Prostate gland (tissue), 2 donors: ENCODE measurements at regions of chr1 and their contacts with region 1.

Region 1: DNA sequence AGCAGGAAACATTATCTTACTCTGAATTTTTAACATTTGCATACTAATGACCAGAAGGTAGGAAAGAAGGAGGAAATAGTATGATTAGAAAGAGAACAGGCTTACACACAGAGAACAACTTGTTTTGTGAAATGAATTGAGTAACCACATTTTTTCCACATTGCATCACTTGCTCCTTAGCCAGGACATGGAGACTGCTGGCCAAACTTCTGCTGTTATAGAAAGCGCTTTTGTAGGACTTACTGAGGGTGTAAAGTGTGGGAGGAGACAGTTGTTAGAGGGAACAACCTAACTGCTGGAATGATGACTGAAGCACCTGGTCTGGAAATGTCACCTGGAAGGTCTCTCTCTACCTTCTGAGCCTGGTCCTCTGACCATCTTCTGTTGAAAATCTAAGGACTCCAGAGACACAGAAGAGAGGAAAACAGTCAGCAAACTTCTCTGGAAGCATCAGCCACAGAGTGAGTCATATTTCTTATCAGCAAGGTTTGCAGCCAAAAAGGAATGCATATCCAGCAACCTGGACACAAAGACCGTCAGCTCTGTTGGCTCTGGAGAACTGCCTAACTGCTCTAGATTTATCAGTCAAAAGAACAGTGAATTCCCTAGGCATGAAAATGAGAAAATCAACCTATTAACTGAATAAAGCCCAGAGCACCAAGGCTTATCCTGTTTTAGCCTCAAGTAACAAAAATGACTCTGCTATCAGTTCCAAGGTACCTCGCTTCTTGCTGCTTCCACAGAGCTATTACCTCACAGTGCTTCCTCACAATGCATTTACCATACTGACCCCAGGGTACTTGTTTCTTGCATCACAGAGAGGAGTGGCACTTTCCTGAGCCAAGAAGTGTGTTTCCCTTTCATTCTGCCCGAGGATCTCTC is 88.0 kb upstream of the SLFNL1 start:
- DNase-seq: peak; percentile 72
- H3K4me3 ChIP-seq: no peak overlapping the region
- H3K27ac ChIP-seq: peak overlapping the region; percentile 65 to 74
- H3K4me1 ChIP-seq: peaks cover 6% of the 10 kb centered on the region
- H3K27me3 ChIP-seq: no peaks in the 10 kb centered on the region
- CTCF ChIP-seq: no peak
- POLR2A ChIP-seq: no peak

Region 2: GRCh38 chr1:41023279-41023990 is 86.1 kb before region 1 on chr1:
- intact Hi-C with region 1: loop called (anchors 10 kb)
- DNase-seq: no peak
- H3K4me3 ChIP-seq: no peak overlapping the region
- H3K27ac ChIP-seq: no peak overlapping the region
- H3K4me1 ChIP-seq: no peaks in the 10 kb centered on the region
- H3K27me3 ChIP-seq: no peaks in the 10 kb centered on the region
- CTCF ChIP-seq: peak in 1 of 4 experiments; percentile 26
- POLR2A ChIP-seq: no peak

Region 3: DNA sequence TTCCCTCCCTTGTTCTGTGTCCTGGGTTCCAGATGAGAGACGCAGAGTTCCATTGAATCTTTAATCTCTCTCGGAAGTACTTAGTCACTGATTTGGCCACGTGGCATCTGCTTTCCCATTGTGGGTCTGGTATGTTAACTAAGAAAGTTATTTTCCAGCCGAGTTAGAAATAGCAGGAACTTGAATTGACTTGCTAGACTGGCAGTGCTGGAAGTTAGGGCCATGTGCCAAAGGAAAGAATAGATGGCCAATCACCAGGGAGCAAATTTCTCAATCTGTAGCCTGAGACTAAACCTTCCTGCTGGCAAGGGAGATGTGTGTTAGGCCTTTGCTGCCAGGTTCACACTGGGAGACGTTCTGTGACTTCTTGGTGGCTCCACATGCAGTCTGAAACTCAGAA is 63.8 kb before region 1 on chr1:
- intact Hi-C with region 1: loop called (anchors 10 kb)
- DNase-seq: peak; percentile 93
- H3K4me3 ChIP-seq: peak overlapping the region; percentile 4 to 14
- H3K27ac ChIP-seq: peak overlapping the region; percentile 86 to 90
- H3K4me1 ChIP-seq: peaks cover 22% of the 10 kb centered on the region
- H3K27me3 ChIP-seq: no peaks in the 10 kb centered on the region
- CTCF ChIP-seq: no peak
- POLR2A ChIP-seq: no peak

Region 4: GRCh38 chr1:41294216-41294615 is 184.7 kb after region 1 on chr1:
- intact Hi-C with region 1: no loop called
- DNase-seq: peak; percentile 24
- H3K4me3 ChIP-seq: no peak overlapping the region
- H3K27ac ChIP-seq: no peak overlapping the region
- H3K4me1 ChIP-seq: no peaks in the 10 kb centered on the region
- H3K27me3 ChIP-seq: no peaks in the 10 kb centered on the region
- CTCF ChIP-seq: no peak
- POLR2A ChIP-seq: no peak